GM23248 (cell line): ENCODE measurements at regions of chr3 and their contacts with region 1.

Region 1: DNA sequence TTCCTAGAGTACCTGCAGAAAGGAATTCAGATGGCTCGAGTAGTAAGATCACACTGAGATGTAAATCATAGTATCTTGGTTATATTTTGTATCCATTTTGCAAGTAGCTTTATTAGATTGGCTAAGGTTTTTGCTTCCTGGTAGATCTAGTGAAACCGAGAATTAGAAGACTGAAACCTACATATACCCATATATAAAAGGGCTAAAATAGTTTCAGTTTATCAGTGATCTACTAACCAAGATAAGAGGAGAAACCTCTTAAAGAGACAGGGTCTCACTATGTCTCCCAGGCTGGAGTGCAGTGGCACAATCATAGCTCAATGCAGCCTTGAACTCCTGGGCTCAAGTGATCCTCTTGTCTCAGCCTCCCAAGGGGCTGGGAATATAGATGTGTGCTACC is 135.3 kb downstream of the PCCB start:
- DNase-seq: no peak
- H3K4me3 ChIP-seq: no peak overlapping the region
- H3K27ac ChIP-seq: no peak overlapping the region
- H3K4me1 ChIP-seq: 0 out of 2 replicates have a peak, but pooled peaks cover 10% of the 10 kb centered on the region
- H3K27me3 ChIP-seq: no peaks in the 10 kb centered on the region

Region 2: DNA sequence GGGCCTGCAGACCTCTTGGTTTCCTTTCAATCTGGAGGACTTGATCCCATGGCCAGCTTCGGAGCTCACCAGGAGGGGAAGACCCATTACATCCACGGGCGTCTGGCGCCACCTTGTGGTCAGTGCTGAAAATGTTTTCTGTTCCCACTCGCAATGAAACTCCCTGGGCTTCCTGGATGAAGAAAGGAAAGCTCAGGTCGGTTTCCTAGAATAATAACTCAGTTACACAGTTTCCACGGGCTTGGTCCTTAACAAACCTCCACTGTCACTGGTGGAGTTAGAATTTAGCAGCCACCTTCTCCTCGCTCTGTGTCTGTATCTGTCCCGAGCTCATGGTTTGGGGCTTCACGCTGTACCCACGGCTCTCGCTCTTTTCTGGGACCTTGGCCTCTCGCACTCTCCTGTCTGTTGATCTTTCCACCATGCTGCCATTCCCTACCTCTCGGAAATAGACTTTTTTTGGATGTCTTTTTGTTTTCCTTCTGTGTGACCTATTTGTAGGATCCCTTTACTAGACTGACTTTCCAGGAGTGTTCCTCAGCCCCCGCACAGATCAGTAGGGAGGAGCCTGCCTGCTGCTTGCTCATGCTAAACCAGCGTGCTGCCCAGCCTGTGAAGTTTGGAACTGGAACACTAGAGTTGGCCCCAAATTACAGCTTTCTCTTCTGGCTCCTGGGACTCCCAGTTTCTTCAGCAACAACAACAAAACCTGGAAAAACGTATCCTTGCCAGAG is 628.7 kb after region 1 on chr3:
- in situ Hi-C with region 1: loop called (anchors 25 kb)
- DNase-seq: peak; percentile 91
- H3K4me3 ChIP-seq: peak overlapping the region; percentile 79
- H3K27ac ChIP-seq: peak overlapping the region; percentile 46
- H3K4me1 ChIP-seq: peaks cover 27% of the 10 kb centered on the region
- H3K27me3 ChIP-seq: no peaks in the 10 kb centered on the region